Brain microvascular endothelial cell (primary cell): ENCODE measurements at regions of chr15 and their contacts with region 1.

Region 1: GRCh38 chr15:34708422-34708821 is 46.4 kb downstream of the GJD2 start:
- DNase-seq: peak; percentile 20
- H3K4me3 ChIP-seq: no peak overlapping the region
- H3K27ac ChIP-seq: no peak overlapping the region
- H3K27me3 ChIP-seq: peaks cover 3% of the 10 kb centered on the region
- CTCF ChIP-seq: peak; percentile 86

Region 2: DNA sequence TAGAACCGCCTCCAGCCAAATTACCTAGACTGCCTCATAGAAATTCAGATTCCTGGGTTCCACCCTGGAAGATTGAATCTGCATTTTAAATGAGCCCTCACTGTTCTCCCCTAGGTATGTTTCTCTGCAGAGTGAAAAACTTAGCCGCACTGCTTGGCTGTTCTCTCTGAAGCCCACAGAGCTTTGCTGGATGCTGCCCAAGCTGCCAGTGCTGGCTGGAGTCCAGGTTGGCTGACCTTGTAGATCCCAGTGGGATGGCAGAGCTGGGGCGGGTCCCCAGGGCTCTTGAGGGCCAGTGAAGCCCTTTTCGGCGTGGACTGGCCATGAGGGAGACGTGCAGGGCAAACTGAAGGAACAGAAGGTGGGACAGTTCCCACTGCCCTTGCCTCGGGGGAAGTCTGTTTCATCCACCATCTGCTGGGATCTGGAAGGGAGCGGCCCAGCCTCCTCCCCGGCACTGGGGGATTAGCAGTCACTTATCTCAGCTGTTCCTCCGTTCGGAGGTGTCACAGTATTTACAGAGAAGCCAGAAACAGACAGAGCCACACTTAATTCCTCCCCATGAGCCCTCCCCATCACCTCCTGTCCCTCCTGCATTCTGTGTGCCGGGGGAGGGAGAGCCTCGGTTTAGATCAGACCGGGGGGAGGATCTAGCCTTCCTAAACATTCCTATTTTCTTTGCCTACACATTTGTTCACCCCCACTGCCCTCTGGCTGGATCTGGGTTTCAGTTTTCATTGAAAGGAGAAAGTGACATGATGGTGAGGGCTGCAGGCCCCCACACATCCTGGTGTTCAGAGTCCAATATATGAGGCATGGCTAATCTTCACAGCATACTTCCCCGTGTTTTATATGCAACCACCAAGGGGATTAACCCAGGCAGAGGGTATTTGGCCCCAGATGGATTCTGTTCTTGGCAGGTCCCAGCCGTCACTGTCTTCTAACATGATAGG is 91.0 kb after region 1 on chr15:
- in situ Hi-C with region 1: loop called (anchors 25 kb)
- DNase-seq: no peak
- H3K4me3 ChIP-seq: no peak overlapping the region
- H3K27ac ChIP-seq: no peak overlapping the region
- H3K27me3 ChIP-seq: peaks cover 11% of the 10 kb centered on the region
- CTCF ChIP-seq: no peak

Region 3: GRCh38 chr15:34869110-34869509 is 160.7 kb after region 1 on chr15:
- in situ Hi-C with region 1: no loop called
- DNase-seq: no peak
- H3K4me3 ChIP-seq: no peak overlapping the region
- H3K27ac ChIP-seq: no peak overlapping the region
- H3K27me3 ChIP-seq: no peaks in the 10 kb centered on the region
- CTCF ChIP-seq: no peak